Lower leg skin (tissue), 4 donors: ENCODE measurements at regions of chr14 and their contacts with region 1.

Region 1: GRCh38 chr14:30681752-30682355 is 59.7 kb downstream of the SCFD1 start:
- DNase-seq: no peak
- H3K4me3 ChIP-seq: no peak overlapping the region
- CTCF ChIP-seq: no peak
- POLR2A ChIP-seq: no peak

Region 2: DNA sequence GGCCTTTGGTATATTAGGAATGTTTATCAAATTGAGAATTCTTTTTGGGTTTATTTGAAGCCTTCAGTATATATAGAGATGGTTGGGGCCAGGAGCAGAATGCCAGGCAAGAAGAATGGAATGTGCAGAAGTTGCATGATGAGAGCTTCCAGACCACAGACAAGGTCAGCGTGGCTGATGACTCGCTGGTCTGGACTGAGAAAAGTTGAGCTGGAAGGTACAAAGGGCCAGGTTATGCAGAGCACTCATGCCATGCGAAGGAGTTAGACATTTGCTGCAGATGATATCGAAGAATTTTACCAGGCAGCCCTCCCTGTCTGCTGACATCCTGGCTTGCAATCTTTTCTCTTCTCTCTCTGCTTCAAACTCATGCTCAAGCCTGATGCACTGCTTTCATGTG is 1199.1 kb after region 1 on chr14:
- intact Hi-C with region 1: loop called (anchors 5 kb)
- DNase-seq: no peak
- H3K4me3 ChIP-seq: no peak overlapping the region
- CTCF ChIP-seq: no peak
- POLR2A ChIP-seq: no peak